ENCODE measurements at regions of chr12 and their contacts with region 1.

Region 1: GRCh38 chr12:113196996-113197395 is 11.5 kb downstream of the RITA1 start:
- DNase-seq: no peak
- ATAC-seq: peak; percentile 98
- H3K4me3 ChIP-seq: no peak overlapping the region
- H3K27ac ChIP-seq: no peak overlapping the region
- H3K4me1 ChIP-seq: no peaks in the 10 kb centered on the region
- H3K27me3 ChIP-seq: no peaks in the 10 kb centered on the region
- CTCF ChIP-seq: peak; percentile 73 to 82 (median 81)
- EP300 ChIP-seq: no peak
- POLR2A ChIP-seq: no peak
- RAD21 ChIP-seq: peak; percentile 90

Region 2: GRCh38 chr12:113184900-113185773 is 11.9 kb before region 1 on chr12 and contains the starts of genes DDX54 and RITA1:
- CTCF ChIA-PET with region 1: interaction called, 24 read pairs
- POLR2A ChIA-PET with region 1: interaction called, 4 read pairs
- RAD21 ChIA-PET with region 1: interaction called, 7 read pairs
- SMC1A ChIA-PET with region 1: interaction called, 7 read pairs
- in situ Hi-C with region 1: no loop called
- intact Hi-C with region 1: no loop called
- DNase-seq: peak; percentile 81
- ATAC-seq: peak; percentile 87
- H3K4me3 ChIP-seq: peak within 1 kb of the TSS; percentile 86
- H3K27ac ChIP-seq: peak within 1 kb of the TSS; percentile 94
- H3K4me1 ChIP-seq: peaks cover 9% of the 10 kb centered on the region
- H3K27me3 ChIP-seq: no peaks in the 10 kb centered on the region
- CTCF ChIP-seq: no peak
- EP300 ChIP-seq: no peak
- POLR2A ChIP-seq: peak; percentile 98
- RAD21 ChIP-seq: no peak
- polyA plus RNA-seq, gene DDX54: 1.9 to 8.6 TPM
- polyA plus RNA-seq, gene RITA1: 2.3 to 6.4 TPM

Region 3: DNA sequence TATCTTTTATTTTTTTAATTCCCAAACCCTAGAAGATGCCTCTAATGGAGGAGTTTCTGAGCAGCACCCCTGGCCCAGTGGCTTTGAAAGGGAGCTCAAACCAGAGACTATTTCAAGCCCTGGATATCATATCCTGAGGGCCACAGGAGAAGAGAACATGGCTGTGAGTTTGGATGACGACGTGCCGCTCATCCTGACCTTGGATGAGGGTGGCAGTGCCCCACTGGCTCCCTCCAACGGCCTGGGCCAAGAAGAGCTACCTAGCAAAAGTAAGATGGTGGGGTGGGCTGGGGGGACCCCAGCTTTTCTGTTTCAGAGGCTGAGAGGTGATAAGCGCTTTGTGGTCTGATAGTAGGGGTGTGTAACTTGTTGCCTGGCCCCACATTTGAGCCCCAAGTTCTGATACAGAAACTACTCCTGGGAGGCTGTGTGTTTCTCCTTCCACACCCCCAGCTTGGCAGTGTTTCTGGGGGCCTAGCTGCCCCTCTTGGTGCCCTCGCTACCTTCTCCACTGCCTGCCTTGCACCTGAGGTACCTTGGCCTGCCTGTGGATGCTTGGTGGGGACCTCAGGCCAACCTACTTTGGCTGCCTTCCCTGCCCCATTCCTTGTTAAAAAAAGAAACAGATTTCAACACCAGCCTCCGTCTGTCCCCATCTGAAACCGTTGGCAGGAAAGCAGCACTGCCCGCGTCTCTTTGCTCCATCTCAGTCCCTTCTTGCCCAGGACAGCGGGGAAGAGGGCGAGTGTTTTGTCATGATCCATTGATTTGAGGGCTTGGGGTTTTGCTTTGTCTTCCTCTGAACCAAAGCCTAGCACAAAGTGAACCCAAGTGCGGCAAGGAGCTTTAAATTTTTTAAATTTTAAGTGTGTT is 29.9 kb after region 1 on chr12:
- CTCF ChIA-PET with region 1: interaction called, 11 read pairs
- POLR2A ChIA-PET with region 1: interaction called, 6 read pairs
- RAD21 ChIA-PET with region 1: interaction called, 6 read pairs
- SMC1A ChIA-PET with region 1: interaction called, 50 read pairs
- in situ Hi-C with region 1: no loop called
- intact Hi-C with region 1: loop called (anchors 2 kb)
- DNase-seq: no peak
- ATAC-seq: no peak
- H3K4me3 ChIP-seq: no peak overlapping the region
- H3K27ac ChIP-seq: no peak overlapping the region
- H3K4me1 ChIP-seq: peaks cover 51% of the 10 kb centered on the region
- H3K27me3 ChIP-seq: no peaks in the 10 kb centered on the region
- CTCF ChIP-seq: no peak
- EP300 ChIP-seq: no peak
- POLR2A ChIP-seq: no peak
- RAD21 ChIP-seq: no peak

Region 4: GRCh38 chr12:113271853-113272561 is 75.0 kb after region 1 on chr12:
- CTCF ChIA-PET with region 1: no interaction called
- POLR2A ChIA-PET with region 1: no interaction called
- RAD21 ChIA-PET with region 1: no interaction called
- SMC1A ChIA-PET with region 1: no interaction called
- in situ Hi-C with region 1: no loop called
- intact Hi-C with region 1: loop called (anchors 10 kb)
- DNase-seq: no peak
- ATAC-seq: peak; percentile 69
- H3K4me3 ChIP-seq: no peak overlapping the region
- H3K27ac ChIP-seq: no peak overlapping the region
- H3K4me1 ChIP-seq: peaks cover 3% of the 10 kb centered on the region
- H3K27me3 ChIP-seq: no peaks in the 10 kb centered on the region
- CTCF ChIP-seq: no peak
- EP300 ChIP-seq: no peak
- POLR2A ChIP-seq: no peak
- RAD21 ChIP-seq: no peak

Region 5: DNA sequence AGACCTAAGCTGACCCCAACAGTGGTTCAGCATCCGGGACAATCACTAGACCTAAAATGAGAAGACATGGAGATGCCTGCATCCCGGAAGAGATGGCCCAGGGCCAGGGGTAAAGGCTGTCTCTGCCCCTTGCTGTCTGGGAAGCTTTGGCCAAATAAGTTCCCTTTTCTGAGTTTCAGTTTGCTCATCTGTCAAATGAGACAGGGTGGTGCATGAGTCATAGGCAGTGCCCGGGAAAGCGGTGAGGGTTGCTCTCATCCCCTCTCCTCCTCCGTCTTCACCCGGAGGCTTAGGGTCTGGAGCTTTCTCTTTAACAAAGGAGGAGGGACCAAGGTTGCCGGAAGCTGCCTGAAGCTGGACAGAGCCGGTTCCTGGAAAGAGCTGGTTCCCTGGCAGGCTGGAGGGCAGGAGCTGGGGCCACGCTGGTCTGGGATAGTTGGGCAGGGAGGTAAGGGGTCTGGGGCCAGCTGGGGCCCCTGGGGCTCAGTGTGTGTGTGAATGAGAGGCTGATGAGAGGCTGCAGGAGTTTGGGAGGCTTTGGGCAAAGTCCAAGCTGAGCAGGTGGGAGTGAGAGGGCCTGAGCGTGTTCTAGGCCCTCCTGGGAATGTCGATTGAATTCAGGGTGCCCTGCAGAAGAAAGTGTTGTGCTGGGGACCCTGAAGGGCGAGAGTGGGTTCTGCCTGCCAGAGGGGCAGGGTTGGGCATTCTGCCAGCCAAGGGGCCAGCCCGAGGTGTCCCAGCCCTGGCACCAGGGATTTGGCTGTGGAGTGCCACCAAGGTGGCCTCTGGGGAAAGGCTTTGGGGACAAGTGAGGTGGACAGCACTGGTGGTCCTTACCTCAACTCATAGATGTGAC is 225.3 kb after region 1 on chr12 and contains the start of gene SDSL:
- CTCF ChIA-PET with region 1: interaction called, 16 read pairs
- POLR2A ChIA-PET with region 1: interaction called, 3 read pairs
- RAD21 ChIA-PET with region 1: interaction called, 9 read pairs
- SMC1A ChIA-PET with region 1: interaction called, 4 read pairs
- in situ Hi-C with region 1: loop called (anchors 5 kb)
- intact Hi-C with region 1: no loop called
- DNase-seq: peak; percentile 76
- ATAC-seq: peak; percentile 95
- H3K4me3 ChIP-seq: peak within 1 kb of the TSS; percentile 63
- H3K27ac ChIP-seq: peak within 1 kb of the TSS; percentile 23; the same call in 1 of the 2 replicates
- H3K4me1 ChIP-seq: peaks cover 10% of the 10 kb centered on the region
- H3K27me3 ChIP-seq: no peaks in the 10 kb centered on the region
- CTCF ChIP-seq: no peak
- EP300 ChIP-seq: peak in 1 of 2 experiments; percentile 28; a peak in 1 of 4 replicates
- POLR2A ChIP-seq: no peak; the same call in 1 of the 2 replicates
- RAD21 ChIP-seq: no peak
- polyA plus RNA-seq, gene SDSL: 0.18 to 0.49 TPM

Region 6: GRCh38 chr12:113479590-113480335 is 282.8 kb after region 1 on chr12:
- CTCF ChIA-PET with region 1: no interaction called
- POLR2A ChIA-PET with region 1: no interaction called
- RAD21 ChIA-PET with region 1: no interaction called
- SMC1A ChIA-PET with region 1: no interaction called
- in situ Hi-C with region 1: no loop called
- intact Hi-C with region 1: no loop called
- DNase-seq: no peak
- ATAC-seq: no peak
- H3K4me3 ChIP-seq: no peak overlapping the region
- H3K27ac ChIP-seq: no peak overlapping the region
- H3K4me1 ChIP-seq: no peaks in the 10 kb centered on the region
- H3K27me3 ChIP-seq: peaks cover 14 to 20% of the 10 kb centered on the region in 2 experiments
- CTCF ChIP-seq: no peak
- EP300 ChIP-seq: no peak
- POLR2A ChIP-seq: no peak
- RAD21 ChIP-seq: no peak